ENCODE measurements at regions of chr9 and their contacts with region 1.

Region 1: DNA sequence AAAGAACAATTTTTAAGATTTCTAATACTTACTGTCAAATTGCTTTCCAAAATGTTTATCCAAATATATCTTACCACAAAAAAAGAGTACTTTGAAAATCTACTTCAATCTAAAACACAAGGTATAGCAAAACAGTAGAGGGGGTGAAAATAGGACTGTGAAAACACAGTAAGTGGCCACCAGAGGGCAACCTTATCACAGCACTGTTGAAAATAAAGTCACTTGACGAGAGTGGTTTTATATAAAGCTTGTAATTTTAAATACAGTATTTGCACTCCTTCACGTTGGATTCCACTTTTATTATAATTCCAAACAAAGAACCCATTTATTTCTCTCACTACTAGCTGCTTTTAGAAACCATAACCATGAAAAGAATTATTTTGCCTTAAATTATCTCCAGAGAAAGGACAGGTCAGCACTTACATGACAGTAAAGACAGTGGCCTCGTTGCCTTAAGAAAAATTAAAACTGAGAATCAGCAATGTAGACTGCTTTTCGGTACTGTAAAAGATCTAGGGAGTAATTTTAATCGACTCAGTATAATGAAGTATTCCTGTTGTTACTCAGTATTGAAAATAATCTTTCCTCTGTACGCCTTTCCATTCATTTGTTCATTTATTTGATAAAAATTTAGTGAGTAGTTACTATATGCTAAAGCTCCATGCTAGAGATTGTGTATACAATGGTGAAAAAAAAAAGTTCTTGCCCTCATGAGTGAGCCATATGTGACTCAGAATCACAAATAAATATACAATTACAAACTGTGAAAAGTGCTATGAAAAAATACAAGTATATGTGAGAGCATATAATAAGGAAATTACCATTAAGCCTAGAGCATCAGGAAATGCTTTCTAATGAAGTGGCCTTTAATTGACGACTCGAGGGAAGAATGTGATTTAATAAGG is 40.0 kb upstream of the CDK5RAP2 start:
- DNase-seq: peak in 3 of 5 donors; percentile 30 to 39 (median 32)
- ATAC-seq: peak in 3 of 4 donors; percentile 68 to 80 (median 76)
- H3K4me3 ChIP-seq: peak overlapping the region in 1 of 12 donors; percentile 13
- H3K27ac ChIP-seq: no peak overlapping the region
- H3K4me1 ChIP-seq: peaks cover 0 to 11% (median 0%) of the 10 kb centered on the region in 12 donors
- H3K27me3 ChIP-seq: no peaks in the 10 kb centered on the region
- CTCF ChIP-seq: peak; percentile 74 to 92 (median 82)
- POLR2A ChIP-seq: no peak

Region 2: DNA sequence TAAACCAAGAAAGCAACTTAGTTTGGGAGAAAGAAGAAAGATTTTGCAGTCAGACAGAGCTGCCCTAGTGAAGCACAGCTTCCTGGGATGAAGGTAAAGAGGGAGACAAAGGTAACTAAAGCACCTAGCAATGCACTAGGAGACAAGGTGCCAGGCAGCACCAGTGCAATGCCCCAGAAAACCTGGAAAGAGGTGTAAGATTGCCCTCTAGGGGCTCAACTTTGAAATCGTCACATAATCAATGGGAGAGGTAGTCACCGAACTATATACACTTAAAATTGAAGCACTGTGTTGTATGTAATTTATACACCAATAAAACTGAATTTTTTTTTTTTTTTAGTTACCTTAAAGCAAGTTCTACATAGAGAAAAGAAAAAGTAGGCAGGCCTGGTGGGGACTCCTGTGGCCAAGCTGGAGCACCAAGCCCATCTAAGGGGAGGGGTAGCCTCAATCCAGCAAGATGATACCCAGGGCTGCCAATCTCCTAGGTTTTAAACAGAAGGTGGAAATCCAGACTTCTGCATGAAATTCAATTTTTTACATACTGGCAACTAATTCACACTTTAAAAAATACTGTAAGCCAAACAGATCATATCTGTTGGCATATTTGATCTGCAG is 88.2 kb before region 1 on chr9:
- intact Hi-C with region 1: no loop called
- DNase-seq: no peak
- ATAC-seq: peak in 3 of 4 donors; percentile 50 to 67 (median 67)
- H3K4me3 ChIP-seq: no peak overlapping the region
- H3K27ac ChIP-seq: peak overlapping the region in 3 of 12 donors; percentile 36 to 50 (median 36)
- H3K4me1 ChIP-seq: peaks cover 0 to 15% (median 0%) of the 10 kb centered on the region in 12 donors
- H3K27me3 ChIP-seq: no peaks in the 10 kb centered on the region
- CTCF ChIP-seq: peak in 11 of 12 donors; percentile 15 to 47 (median 34)
- POLR2A ChIP-seq: no peak

Region 3: DNA sequence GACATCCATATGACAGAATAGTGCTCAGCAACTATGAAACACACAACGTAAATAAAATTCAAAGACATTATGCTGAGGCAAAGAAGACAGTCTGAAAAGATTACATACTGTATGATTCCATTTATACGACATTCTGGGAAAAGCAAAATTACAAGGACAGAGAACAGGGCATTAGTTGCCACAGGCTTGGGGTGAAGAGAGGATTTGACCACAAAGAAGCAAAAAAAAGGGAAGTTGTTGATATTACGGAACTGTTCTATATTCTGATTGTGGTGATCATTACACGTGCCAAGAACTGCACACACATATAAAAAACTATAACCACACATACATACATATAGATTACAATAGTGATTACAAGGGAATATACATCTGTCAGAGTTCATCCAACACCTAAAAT is 64.2 kb before region 1 on chr9:
- intact Hi-C with region 1: no loop called
- DNase-seq: no peak
- ATAC-seq: peak in 1 of 4 donors; percentile 33
- H3K4me3 ChIP-seq: no peak overlapping the region
- H3K27ac ChIP-seq: no peak overlapping the region
- H3K4me1 ChIP-seq: peaks cover 0 to 8% (median 0%) of the 10 kb centered on the region in 12 donors
- H3K27me3 ChIP-seq: no peaks in the 10 kb centered on the region
- CTCF ChIP-seq: no peak
- POLR2A ChIP-seq: no peak

Region 4: DNA sequence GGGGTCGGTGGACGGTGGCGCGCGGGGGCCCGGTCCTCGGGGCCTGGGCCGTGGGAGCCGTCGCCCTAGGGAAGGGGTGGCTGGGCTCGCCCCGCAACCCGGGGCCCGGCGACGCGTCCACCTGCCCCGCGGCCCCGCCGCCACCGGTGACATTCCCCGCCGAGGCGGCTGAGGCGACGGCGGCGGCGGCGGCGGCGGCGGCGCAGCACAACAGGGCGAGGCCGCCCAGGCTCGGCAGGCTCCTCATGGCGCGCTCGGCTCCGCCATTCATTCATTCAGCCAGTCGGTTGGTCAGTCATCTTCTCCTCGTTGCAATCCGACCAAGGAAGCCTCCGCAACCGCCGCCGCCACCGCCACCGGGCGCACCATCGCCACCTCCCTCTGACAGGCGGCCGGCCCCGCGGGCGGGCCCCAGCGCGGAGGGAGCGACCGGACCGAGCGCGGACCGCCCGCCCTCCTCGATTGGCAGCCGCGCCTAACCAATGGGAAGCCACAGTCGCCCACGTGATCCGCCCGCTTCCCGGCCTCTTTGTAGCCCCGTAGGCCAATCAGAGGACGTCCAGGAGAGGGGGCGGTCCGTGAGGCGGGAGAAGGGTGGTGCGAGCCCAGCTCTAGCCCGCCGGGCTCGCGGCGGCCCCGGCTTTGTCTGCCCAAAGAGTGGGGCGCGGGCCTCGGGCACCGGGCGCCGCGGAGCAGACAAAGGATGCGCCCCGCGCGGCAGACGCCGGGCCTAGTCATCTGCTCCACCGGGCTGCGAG is 94.3 kb after region 1 on chr9 and contains the start of gene MEGF9:
- intact Hi-C with region 1: loop called in 5 of 10 experiments (anchors 5 to 10 kb)
- DNase-seq: peak; percentile 99
- ATAC-seq: peak; percentile 99
- H3K4me3 ChIP-seq: peak within 1 kb of the TSS; percentile 68 to 96 (median 78)
- H3K27ac ChIP-seq: peak within 1 kb of the TSS in 11 of 12 donors; percentile 14 to 91 (median 75)
- H3K4me1 ChIP-seq: peaks cover 0 to 49% (median 24%) of the 10 kb centered on the region in 12 donors
- H3K27me3 ChIP-seq: no peaks in the 10 kb centered on the region
- CTCF ChIP-seq: peak in 1 of 12 donors; percentile 5
- POLR2A ChIP-seq: peak in 1 of 2 donors; percentile 88
- total RNA-seq, gene MEGF9: 5.0 to 46.0 (median 13.3) TPM